HEK293 (cell line): ENCODE measurements at regions of chr6 and their contacts with region 1.

Region 1: DNA sequence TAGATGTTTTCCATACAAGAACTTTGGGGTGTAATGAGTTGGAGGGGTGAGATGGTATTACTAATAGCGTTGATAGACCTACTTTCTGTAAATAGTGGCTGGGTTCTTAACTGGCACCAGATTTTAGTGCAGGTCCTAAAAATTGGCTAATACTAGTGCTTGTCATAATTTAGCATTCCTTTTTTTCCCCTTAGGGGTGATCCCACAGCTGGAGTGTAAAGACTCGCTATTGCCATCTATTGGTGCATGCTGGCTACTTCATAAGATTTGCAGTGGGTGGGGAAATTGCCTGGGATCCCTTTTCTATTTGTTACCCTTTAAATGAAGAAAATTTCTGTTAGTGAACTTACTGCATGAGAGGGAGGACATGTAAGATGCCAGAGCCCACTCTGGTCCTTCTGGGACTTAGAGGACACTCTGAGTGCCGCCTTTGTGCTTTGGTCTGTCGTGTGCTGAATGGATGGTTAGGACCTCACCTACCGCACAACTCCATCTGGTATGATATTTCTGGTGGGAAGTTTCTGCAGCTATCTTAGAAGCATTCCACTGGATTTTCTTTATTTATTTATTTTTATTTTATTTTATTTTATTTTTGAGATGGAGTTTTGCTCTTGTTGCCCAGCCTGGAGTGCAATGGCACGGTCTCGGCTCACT is 195.5 kb downstream of the JARID2 start:
- H3K4me3 ChIP-seq: no peak overlapping the region
- H3K27ac ChIP-seq: no peak overlapping the region
- H3K4me1 ChIP-seq: peaks cover 39% of the 10 kb centered on the region
- CTCF ChIP-seq: peak; percentile 21; the same call in 1 of the 2 replicates

Region 2: DNA sequence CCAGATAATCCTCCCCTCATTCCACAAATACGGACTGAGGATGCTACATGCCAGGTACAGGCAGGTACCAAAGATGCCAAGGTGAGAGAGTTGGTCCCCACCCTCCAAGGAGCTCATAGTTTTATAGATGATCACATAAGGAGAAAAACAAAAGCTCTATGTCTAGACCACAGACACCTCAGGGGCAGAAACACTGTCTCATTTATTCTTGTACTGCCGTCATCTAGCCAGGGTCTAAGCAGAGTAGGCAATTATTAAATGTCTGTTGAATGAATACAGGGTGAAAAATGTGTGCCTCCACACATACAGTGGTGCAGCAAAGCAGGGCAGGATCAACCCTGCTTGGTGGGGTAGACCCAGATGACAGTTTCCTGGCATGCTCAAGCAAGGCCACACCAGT is 635.2 kb before region 1 on chr6:
- CTCF ChIA-PET with region 1: no interaction called
- POLR2A ChIA-PET with region 1: no interaction called
- H3K4me3 ChIP-seq: no peak overlapping the region
- H3K27ac ChIP-seq: no peak overlapping the region
- H3K4me1 ChIP-seq: 0 out of 2 replicates have a peak, but pooled peaks cover 6% of the 10 kb centered on the region
- CTCF ChIP-seq: no peak

Region 3: DNA sequence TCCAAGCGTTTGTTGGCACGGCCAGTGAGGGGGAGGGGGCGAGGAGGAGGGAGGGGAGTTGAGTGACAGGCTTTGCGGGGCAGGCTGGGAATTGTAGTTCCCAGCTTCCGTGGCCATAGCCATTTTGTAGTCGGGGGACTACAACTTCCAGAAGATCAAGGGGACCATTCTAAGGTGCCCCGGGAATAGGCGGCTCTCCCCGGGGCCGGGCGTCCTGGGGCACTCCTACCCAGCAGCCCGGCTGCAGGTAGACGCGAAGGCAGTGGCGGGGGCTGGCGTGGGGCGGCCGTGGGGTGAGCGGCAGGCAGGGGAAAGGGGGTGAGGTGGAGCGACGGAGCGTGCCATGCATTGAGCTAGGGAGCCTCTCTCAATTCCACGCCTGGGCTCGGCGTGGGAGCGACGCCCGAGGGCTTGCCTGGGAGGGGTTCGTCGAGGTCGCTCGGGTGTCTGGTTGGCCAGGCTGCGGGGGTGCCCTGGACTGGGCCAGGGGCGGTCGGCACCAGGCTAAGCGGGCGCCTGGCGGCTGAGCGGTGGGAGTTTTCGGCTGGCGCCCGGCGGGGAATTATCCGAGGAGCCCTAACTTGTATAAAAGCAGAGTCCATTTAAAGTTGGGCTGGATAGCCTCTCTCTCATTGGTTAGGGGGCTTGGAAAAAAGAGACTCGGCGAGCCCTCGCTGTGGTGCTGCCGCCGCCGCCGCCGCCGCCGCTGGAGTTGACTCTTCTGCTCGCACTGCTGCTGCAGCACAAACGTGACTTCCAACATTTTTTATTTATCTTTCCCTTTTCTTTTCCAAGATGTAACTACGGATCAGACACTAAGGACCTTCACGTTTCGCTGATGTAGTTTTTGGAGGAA is 195.8 kb before region 1 on chr6 and contains the start of gene JARID2:
- CTCF ChIA-PET with region 1: interaction called, 24 read pairs
- POLR2A ChIA-PET with region 1: no interaction called
- H3K4me3 ChIP-seq: peak within 1 kb of the TSS; percentile 96
- H3K27ac ChIP-seq: peak within 1 kb of the TSS; percentile 97
- H3K4me1 ChIP-seq: peaks cover 9% of the 10 kb centered on the region
- CTCF ChIP-seq: peak; percentile 25; the same call in 1 of the 2 replicates

Region 4: DNA sequence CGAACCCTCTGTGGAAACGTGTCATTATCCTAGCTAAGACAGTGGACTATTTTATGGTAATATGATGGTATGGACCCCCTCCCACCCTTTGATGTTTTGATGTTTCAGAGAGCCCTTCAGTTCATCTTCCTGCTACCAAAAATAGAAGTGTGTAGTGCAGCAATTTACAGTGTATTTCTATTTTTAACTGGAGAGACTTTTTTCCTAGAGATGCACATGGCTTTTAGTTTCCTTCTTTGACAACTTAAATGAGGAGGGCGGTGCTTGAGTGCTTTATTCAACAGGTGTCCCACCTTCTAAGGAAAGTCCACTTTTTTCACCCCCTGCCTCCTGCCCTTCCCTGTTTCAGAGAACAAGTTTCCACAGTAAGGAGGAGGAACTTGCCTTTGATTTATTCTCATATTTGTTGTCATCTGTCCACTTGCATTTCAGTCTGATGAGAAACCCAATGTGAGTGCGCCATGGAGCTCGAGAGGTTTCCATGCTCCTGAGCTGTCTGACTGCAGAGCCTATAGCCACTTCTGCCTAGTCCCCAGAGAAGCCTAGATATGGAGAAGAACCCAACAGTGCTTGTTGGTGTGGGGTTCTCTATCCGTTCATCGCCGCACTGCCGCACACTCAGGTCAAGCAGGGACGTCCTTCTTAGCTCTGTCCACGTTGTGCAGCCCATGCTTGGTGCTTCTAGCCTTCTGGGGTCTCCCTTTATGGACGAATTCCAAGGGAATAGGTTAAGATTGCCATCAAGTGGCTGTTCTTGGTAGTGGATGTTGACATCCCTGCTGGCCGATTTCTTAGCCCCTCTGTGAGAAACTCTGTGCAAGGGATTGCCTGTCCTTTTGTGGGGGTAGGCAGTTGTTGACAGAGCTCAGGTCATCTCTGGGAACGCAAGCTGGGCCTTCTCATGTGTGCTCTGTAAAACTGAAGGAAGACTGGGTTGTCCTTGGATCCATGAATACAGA is 51.3 kb before region 1 on chr6:
- CTCF ChIA-PET with region 1: interaction called, 30 read pairs
- POLR2A ChIA-PET with region 1: no interaction called
- H3K4me3 ChIP-seq: no peak overlapping the region
- H3K27ac ChIP-seq: no peak overlapping the region; the same call in 1 of the 2 replicates
- H3K4me1 ChIP-seq: peaks cover 28% of the 10 kb centered on the region
- CTCF ChIP-seq: peak; percentile 81

Region 5: GRCh38 chr6:15429141-15430110 is 11.9 kb before region 1 on chr6:
- CTCF ChIA-PET with region 1: interaction called, 19 read pairs
- POLR2A ChIA-PET with region 1: no interaction called
- H3K4me3 ChIP-seq: no peak overlapping the region
- H3K27ac ChIP-seq: no peak overlapping the region
- H3K4me1 ChIP-seq: peaks cover 57% of the 10 kb centered on the region
- CTCF ChIP-seq: no peak

Region 6: GRCh38 chr6:15458021-15458459 is 16.7 kb after region 1 on chr6:
- CTCF ChIA-PET with region 1: interaction called, 21 read pairs
- POLR2A ChIA-PET with region 1: interaction called, 4 read pairs
- H3K4me3 ChIP-seq: no peak overlapping the region
- H3K27ac ChIP-seq: no peak overlapping the region
- H3K4me1 ChIP-seq: peaks cover 33% of the 10 kb centered on the region
- CTCF ChIP-seq: no peak

Region 7: GRCh38 chr6:15464211-15464725 is 22.9 kb after region 1 on chr6:
- CTCF ChIA-PET with region 1: interaction called, 21 read pairs
- POLR2A ChIA-PET with region 1: interaction called, 3 read pairs
- H3K4me3 ChIP-seq: no peak overlapping the region
- H3K27ac ChIP-seq: no peak overlapping the region
- H3K4me1 ChIP-seq: peaks cover 11% of the 10 kb centered on the region
- CTCF ChIP-seq: peak; percentile 42; the same call in 1 of the 2 replicates